Mammary epithelial cell (primary cell): ENCODE measurements at regions of chr4 and their contacts with region 1.

Region 1: DNA sequence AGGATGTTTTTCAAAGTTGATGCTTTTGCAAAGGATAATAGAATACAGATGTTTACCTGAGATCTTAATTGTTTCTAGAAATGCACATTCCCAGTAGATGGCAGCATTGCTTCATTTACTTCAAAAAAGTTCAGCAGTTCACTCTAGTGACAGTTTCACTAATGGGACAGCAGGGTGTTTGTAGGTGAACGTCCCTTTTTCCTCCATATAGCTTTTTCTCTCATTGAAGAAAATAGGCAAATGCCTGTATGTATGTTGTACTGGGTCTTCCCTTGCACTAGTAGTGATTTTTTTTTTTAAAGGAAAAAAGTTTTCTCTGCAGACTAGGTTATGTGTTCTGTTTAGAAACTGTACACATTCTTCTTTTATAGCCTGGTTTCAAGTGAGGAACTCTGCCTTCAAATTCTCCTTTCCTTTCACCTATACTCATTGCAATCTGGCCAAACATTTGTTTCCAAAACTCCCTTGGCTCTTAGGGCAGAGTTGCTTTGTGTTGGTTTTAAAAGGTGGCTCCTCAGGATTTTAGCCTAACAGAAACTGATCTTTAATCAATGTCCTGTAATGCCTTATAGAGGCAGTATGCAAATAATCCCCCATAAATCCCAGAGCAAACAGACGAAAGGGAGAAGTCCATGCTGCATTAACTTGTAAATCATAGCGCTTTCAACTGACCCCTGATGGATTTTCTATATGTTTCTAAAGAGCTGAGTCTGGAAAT is 86.3 kb downstream of the EGF start:
- DNase-seq: peak; percentile 44
- H3K4me3 ChIP-seq: no peak overlapping the region
- H3K27ac ChIP-seq: no peak overlapping the region
- H3K4me1 ChIP-seq: no peaks in the 10 kb centered on the region
- H3K27me3 ChIP-seq: no peaks in the 10 kb centered on the region
- CTCF ChIP-seq: peak; percentile 53 to 69

Region 2: DNA sequence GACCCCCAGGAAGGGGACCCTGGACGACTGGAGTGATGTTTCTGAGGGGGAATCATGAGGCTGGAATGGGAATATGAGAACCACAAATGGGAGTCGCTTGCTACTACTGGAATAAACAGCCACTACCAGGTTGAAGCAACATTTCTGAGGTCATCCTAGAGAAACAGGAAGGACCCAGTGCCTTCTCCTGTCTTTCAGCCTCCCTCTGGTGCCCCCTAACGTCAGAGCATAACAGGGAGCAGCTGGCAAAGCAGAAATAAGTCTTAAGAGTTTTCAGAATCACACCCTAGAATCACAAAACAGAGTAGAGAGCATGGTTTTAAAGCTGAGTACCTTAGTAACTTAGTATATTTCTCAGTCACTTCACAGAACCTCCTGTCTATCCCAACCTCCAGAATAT is 971.6 kb after region 1 on chr4:
- CTCF ChIA-PET with region 1: no interaction called
- dilution Hi-C with region 1: no loop called
- in situ Hi-C with region 1: no loop called
- intact Hi-C with region 1: loop called (anchors 5 kb)
- DNase-seq: peak; percentile 32
- H3K4me3 ChIP-seq: no peak overlapping the region
- H3K27ac ChIP-seq: no peak overlapping the region
- H3K4me1 ChIP-seq: no peaks in the 10 kb centered on the region
- H3K27me3 ChIP-seq: peaks cover 2% of the 10 kb centered on the region
- CTCF ChIP-seq: peak; percentile 68 to 74